ENCODE measurements at regions of chr2 and their contacts with region 1.

Region 1: DNA sequence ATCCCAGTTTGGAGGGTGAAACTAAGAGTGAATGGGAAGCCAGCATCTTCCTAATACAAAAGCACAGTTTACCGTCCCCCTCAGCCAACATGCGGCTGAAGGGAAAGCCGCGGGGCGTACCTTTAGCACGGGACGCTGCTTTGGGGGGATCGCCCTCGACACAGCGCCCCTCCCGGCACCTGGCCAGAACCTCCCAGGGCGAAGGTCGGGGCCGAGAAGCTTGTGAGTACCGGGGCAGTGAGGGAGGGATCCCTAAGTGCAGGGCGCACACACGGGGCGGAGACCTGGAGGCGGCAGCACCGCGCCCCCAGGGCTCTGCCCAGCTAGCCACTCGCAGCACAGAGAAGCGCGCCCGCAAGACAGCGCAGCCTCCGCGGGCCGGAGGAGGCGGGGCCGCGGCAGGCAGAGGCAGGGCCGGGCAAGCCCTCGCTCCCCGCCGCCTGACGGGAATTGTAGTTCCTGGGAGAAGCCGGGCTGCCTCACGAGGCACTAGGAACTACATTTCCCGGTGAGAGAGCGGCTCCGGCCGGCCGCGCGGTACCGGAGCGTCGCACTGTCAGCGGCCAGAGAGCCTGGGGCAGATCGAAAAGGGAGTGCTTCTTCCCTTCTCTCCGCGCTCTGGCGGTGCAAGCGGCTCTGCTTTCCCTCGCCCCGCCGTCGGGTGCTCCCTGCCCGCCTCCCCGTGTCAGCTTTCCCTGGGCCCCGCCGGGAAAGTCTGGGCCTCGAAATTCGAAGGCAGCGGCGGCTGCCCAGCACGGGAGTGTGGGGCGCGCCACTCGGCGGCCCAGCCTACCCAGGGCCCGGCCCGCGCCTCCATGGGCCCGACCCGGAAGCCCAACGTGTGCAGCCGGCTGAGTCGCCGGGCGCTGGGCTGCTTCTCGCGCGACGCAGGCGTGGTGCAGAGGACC is at the starts of genes DCAF17 and METTL8:
- DNase-seq: peak; percentile 91 to 99
- H3K4me3 ChIP-seq: peak within 1 kb of the TSS; percentile 66 to 80 (median 72)
- H3K27ac ChIP-seq: peak within 1 kb of the TSS; percentile 73
- H3K4me1 ChIP-seq: peaks cover 3 to 19% (median 10%) of the 10 kb centered on the region in 4 experiments
- H3K27me3 ChIP-seq: no peaks in the 10 kb centered on the region
- CTCF ChIP-seq: peak; percentile 60 to 81 (median 65)
- EP300 ChIP-seq: no peak
- POLR2A ChIP-seq: peak; percentile 64 to 95
- RAD21 ChIP-seq: peak; percentile 43 to 54
- total RNA-seq, gene DCAF17: 26.1 and 30.0 TPM in 2 replicates
- total RNA-seq, gene METTL8: 72.9 and 79.7 TPM in 2 replicates

Region 2: GRCh38 chr2:170973492-170974303 is 460.3 kb before region 1 on chr2:
- CTCF ChIA-PET with region 1: no interaction called
- POLR2A ChIA-PET with region 1: interaction called, 18 read pairs
- DNase-seq: peak; percentile 27 to 93
- H3K4me3 ChIP-seq: peak overlapping the region; percentile 18 to 58 (median 42); a peak in 6 of 8 replicates
- H3K27ac ChIP-seq: no peak overlapping the region; the same call in 1 of the 2 replicates
- H3K4me1 ChIP-seq: peaks cover 0 to 10% (median 3%) of the 10 kb centered on the region in 4 experiments; a peak in 6 of 7 replicates
- H3K27me3 ChIP-seq: no peaks in the 10 kb centered on the region
- CTCF ChIP-seq: peak; percentile 83 to 93 (median 83)
- EP300 ChIP-seq: peak in 1 of 2 experiments; percentile 60; a peak in 1 of 3 replicates
- POLR2A ChIP-seq: 0 out of 3 replicates have a peak, but pooled peaks of 1 of the 2 experiments have one; percentile 40
- RAD21 ChIP-seq: peak; percentile 89 to 96

Region 3: DNA sequence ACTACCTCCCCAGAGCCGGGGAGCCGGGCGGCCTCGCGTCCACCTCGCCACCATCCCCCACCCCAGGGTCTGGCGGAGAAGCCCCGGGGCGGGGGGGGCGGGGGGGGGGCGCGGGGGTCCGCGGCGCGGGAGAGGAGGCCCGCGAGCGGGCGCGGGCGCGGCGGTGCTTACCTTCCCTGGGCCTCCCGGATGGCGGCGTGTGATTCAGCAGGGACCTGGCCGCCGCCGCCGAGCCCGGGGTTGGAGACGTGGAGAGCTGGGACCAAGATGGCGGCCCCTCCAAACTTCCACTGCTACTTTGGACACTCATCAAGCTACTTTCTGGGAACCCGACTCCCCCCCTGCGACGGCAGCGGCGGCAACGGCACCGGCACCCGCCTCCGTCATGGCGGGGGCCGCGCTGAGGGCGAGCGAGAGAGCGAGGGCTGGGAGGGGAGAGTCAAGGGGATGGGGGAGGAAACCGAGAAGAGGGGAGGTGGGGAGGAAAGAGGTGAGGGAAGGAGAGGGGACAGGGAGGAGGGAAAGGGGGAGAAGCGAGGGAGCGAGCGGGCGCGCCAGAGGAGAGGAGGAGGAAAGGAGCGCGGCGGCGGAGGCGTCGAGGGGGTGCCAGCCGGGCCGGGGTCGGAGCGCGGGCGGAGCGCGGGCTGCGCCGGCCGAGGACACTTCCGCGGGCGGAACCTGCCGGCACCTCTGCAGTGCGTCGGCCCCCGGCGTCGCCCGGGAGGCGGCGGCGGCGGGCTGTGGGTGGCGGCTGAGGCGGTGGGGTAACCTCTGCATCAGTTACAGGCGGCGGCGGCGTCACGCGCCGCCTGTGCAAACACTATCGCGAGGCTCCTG is 273.7 kb before region 1 on chr2 and contains the start of gene TLK1:
- CTCF ChIA-PET with region 1: no interaction called
- POLR2A ChIA-PET with region 1: interaction called, 21 read pairs
- DNase-seq: peak in 1 of 2 experiments; percentile 84
- H3K4me3 ChIP-seq: peak within 1 kb of the TSS; percentile 87 to 100 (median 92)
- H3K27ac ChIP-seq: peak within 1 kb of the TSS; percentile 92
- H3K4me1 ChIP-seq: peaks cover 0 to 3% (median 0%) of the 10 kb centered on the region in 4 experiments; a peak in 3 of 7 replicates
- H3K27me3 ChIP-seq: no peaks in the 10 kb centered on the region
- CTCF ChIP-seq: no peak
- EP300 ChIP-seq: 0 out of 3 replicates have a peak, but pooled peaks of 1 of the 2 experiments have one; percentile 3
- POLR2A ChIP-seq: peak in 1 of 2 experiments; percentile 68; a peak in 2 of 3 replicates
- RAD21 ChIP-seq: peak in 1 of 2 experiments; percentile 45; a peak in 2 of 4 replicates
- total RNA-seq, gene TLK1: 97.4 and 102 TPM in 2 replicates

Region 4: GRCh38 chr2:171319164-171319810 is 114.7 kb before region 1 on chr2:
- CTCF ChIA-PET with region 1: interaction called, 5 read pairs
- POLR2A ChIA-PET with region 1: interaction called, 16 read pairs
- DNase-seq: peak in 1 of 2 experiments; percentile 38
- H3K4me3 ChIP-seq: peak overlapping the region in 1 of 4 experiments; percentile 35; a peak in 2 of 8 replicates
- H3K27ac ChIP-seq: peak overlapping the region; percentile 74
- H3K4me1 ChIP-seq: peaks cover 22 to 55% (median 41%) of the 10 kb centered on the region in 4 experiments
- H3K27me3 ChIP-seq: no peaks in the 10 kb centered on the region
- CTCF ChIP-seq: no peak
- EP300 ChIP-seq: 0 out of 3 replicates have a peak, but pooled peaks of 1 of the 2 experiments have one; percentile 63
- POLR2A ChIP-seq: no peak; a peak in 1 of 3 replicates
- RAD21 ChIP-seq: no peak

Region 5: DNA sequence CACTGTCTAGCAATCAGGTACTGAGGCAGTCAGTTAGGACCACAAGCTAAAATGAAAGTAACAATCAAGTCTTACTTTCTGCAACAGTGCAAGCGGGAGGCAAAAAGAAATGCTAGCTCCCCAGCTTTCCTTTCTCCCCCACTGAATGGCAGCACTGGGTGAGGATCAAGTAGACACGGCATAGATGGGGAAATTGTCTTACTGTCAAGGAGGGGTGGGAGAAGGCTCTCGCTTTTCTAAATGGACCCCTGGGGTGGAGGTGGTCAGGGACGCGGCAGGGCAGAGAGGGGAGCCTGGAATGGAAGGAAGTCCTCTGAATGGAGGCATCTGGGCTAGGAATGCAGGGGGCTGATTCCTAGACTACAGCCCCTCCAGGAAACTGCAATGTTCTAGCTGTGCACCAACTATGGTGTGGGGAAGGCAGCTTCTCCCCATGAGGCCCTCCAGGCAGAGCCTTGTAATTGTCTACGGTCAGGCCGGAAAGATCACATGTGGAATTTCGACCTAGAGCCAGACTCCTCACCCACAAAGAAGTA is 24.5 kb before region 1 on chr2:
- CTCF ChIA-PET with region 1: interaction called, 5 read pairs
- POLR2A ChIA-PET with region 1: interaction called, 10 read pairs
- DNase-seq: peak in 1 of 2 experiments; percentile 55
- H3K4me3 ChIP-seq: peak overlapping the region in 2 of 4 experiments; percentile 7 to 39; a peak in 3 of 8 replicates
- H3K27ac ChIP-seq: peak overlapping the region; percentile 68
- H3K4me1 ChIP-seq: peaks cover 0 to 13% (median 9%) of the 10 kb centered on the region in 4 experiments; a peak in 6 of 7 replicates
- H3K27me3 ChIP-seq: no peaks in the 10 kb centered on the region
- CTCF ChIP-seq: peak in 1 of 3 experiments; percentile 9; a peak in 1 of 4 replicates
- EP300 ChIP-seq: no peak
- POLR2A ChIP-seq: no peak
- RAD21 ChIP-seq: no peak; a peak in 2 of 4 replicates

Region 6: DNA sequence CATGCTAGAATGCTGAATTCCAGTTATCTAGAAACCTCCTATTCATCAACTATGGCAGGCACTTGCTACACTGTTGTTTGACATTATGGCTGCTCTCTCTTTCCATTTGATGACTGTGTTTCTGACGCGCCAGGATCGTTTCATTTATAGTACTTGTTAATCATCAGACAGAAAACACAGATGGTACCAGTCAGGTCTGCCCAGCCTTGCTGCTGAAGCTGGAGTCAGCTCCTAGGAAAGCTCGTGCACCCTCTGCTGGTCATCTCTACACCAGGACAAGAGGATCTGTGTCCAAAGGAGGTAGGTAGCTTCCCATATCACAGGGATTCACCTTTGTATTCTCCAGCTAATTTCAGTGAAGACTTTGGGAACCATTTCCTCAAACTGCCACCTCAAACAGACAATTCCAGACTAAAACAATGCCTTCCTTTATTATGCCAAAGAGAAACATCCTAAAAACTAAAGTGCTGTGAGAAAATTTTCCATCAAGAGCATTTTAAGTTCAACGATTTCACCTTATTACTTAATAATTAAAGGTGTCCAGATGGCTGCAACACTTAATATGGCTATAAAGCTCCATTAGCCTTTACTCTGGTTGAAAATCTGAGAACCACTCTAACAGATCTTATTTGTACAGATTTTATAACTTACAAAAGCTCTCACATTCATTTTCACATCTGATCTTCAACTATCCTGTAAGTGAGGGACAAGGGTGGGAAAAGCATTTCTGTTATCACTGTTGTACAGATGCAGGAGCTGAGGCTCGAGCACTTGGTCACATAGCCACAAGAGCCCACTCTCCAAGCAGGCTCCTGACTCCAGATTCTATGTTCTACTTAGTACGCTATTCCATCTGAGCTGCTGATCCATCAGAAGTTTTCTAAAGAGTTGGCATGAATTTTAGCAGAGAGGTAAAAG is 17.7 kb before region 1 on chr2:
- CTCF ChIA-PET with region 1: interaction called, 20 read pairs
- POLR2A ChIA-PET with region 1: interaction called, 15 read pairs
- DNase-seq: peak; percentile 65 to 79
- H3K4me3 ChIP-seq: no peak overlapping the region
- H3K27ac ChIP-seq: no peak overlapping the region
- H3K4me1 ChIP-seq: peaks cover 0 to 9% (median 0%) of the 10 kb centered on the region in 4 experiments; a peak in 2 of 7 replicates
- H3K27me3 ChIP-seq: no peaks in the 10 kb centered on the region
- CTCF ChIP-seq: peak; percentile 75 to 91 (median 82)
- EP300 ChIP-seq: no peak
- POLR2A ChIP-seq: no peak
- RAD21 ChIP-seq: peak; percentile 96

Region 7: GRCh38 chr2:171482877-171483276 is 48.9 kb after region 1 on chr2:
- CTCF ChIA-PET with region 1: interaction called, 5 read pairs
- POLR2A ChIA-PET with region 1: interaction called, 12 read pairs
- DNase-seq: peak in 1 of 2 experiments; percentile 5
- H3K4me3 ChIP-seq: no peak overlapping the region
- H3K27ac ChIP-seq: 0 out of 2 replicates have a peak overlapping the region, but pooled peaks have one; percentile 21
- H3K4me1 ChIP-seq: peaks cover 0 to 7% (median 4%) of the 10 kb centered on the region in 4 experiments; a peak in 5 of 7 replicates
- H3K27me3 ChIP-seq: no peaks in the 10 kb centered on the region
- CTCF ChIP-seq: no peak
- EP300 ChIP-seq: no peak
- POLR2A ChIP-seq: 0 out of 3 replicates have a peak, but pooled peaks of 1 of the 2 experiments have one; percentile 25
- RAD21 ChIP-seq: no peak

Region 8: GRCh38 chr2:171592036-171592555 is 158.1 kb after region 1 on chr2:
- CTCF ChIA-PET with region 1: no interaction called
- POLR2A ChIA-PET with region 1: no interaction called
- DNase-seq: no peak
- H3K4me3 ChIP-seq: 0 out of 8 replicates have a peak overlapping the region, but pooled peaks of 1 of the 4 experiments have one; percentile 2
- H3K27ac ChIP-seq: no peak overlapping the region
- H3K4me1 ChIP-seq: peaks cover 0 to 4% (median under 1%) of the 10 kb centered on the region in 4 experiments; a peak in 1 of 7 replicates
- H3K27me3 ChIP-seq: no peaks in the 10 kb centered on the region
- CTCF ChIP-seq: no peak
- EP300 ChIP-seq: no peak
- POLR2A ChIP-seq: no peak
- RAD21 ChIP-seq: no peak

Region 9: DNA sequence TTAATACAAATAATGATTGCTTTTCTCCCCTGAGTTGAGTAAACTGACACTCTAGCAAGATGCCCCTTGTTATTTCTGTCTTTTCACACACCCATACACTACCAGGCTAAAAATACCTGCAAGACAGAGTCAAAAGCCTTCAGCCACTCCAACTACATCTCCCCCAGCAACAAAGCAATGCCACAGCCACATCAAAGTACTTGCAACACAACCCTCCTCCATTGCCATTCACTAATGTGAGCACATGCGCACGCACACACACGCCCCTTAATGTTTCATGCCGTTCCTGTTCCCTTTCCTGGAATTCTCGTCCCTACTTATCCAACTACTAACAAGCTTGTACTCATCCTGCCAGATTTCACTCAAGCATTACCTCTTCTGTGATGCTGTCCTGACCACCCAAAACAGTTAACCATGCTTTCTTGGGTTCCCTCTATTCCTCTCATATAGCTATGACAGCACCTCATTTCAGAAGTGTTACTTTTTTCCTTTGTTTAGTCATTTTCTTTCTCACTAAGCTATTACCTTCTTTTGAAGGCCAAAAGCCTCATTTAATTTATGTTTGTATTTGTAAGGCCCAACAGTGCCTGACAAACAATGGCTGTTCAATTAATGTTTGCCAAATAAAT is 430.5 kb after region 1 on chr2:
- CTCF ChIA-PET with region 1: no interaction called
- POLR2A ChIA-PET with region 1: no interaction called
- DNase-seq: no peak
- H3K4me3 ChIP-seq: no peak overlapping the region
- H3K27ac ChIP-seq: no peak overlapping the region
- H3K4me1 ChIP-seq: no peaks in the 10 kb centered on the region
- H3K27me3 ChIP-seq: no peaks in the 10 kb centered on the region
- CTCF ChIP-seq: no peak
- EP300 ChIP-seq: no peak
- POLR2A ChIP-seq: no peak
- RAD21 ChIP-seq: no peak